ENCODE measurements at regions of chr17 and their contacts with region 1.

Region 1: GRCh38 chr17:17836250-17836817 is 452 bp downstream of the SREBF1 start:
- DNase-seq: peak; percentile 92
- ATAC-seq: peak; percentile 60
- H3K4me3 ChIP-seq: peak overlapping the region; percentile 82 to 94 (median 91)
- H3K27ac ChIP-seq: peak overlapping the region; percentile 90
- H3K4me1 ChIP-seq: peaks cover 84% of the 10 kb centered on the region
- H3K27me3 ChIP-seq: no peaks in the 10 kb centered on the region
- CTCF ChIP-seq: 0 out of 2 replicates have a peak, but pooled peaks have one; percentile 5
- EP300 ChIP-seq: peak in 1 of 2 experiments; percentile 71; a peak in 1 of 4 replicates
- POLR2A ChIP-seq: peak; percentile 96 to 98
- RAD21 ChIP-seq: peak; percentile 65

Region 2: GRCh38 chr17:17812211-17813057 is 23.9 kb before region 1 on chr17:
- CTCF ChIA-PET with region 1: interaction called, 3 read pairs
- POLR2A ChIA-PET with region 1: interaction called, 26 read pairs
- in situ Hi-C with region 1: no loop called
- intact Hi-C with region 1: loop called (anchors 1 kb)
- DNase-seq: peak; percentile 52
- ATAC-seq: peak; percentile 50
- H3K4me3 ChIP-seq: no peak overlapping the region
- H3K27ac ChIP-seq: peak overlapping the region; percentile 58
- H3K4me1 ChIP-seq: peaks cover 28% of the 10 kb centered on the region
- H3K27me3 ChIP-seq: no peaks in the 10 kb centered on the region
- CTCF ChIP-seq: peak; percentile 98
- EP300 ChIP-seq: no peak
- POLR2A ChIP-seq: peak; percentile 16 to 29; a peak in 1 of 4 replicates
- RAD21 ChIP-seq: peak; percentile 95

Region 3: DNA sequence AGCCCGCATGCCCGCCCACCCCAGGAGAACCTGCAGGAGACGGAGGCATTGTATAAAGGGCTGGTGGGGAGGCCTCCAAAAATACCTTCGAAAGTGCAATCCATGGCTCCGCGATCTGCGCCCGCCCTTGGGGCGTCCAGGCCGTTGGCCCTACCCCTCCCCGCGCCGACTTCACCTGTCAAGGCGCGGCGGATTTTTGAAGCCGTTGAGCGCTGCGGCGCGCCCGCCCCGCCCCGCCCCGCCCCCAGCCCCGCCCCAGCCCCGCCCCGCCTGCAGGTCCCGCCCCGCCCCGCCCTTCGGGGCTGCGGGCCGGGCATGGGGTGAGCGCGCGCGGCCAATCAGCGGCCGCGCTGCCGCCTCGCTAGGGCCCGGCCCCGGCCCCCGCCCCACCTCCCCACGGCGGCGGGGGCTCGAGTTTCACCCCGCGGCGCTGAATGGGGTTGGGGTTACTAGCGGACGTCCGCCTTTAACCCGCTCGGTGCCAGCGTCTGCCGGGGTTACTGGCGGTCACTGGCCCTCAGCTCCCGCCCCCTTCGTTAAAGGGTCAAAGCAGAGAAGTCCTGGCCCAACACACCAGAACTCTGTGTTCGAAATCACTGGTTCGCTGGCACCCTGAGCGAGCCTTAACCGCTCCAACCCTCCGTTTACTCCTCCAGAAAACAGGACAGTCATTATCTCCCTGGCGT is 12.8 kb before region 1 on chr17:
- CTCF ChIA-PET with region 1: no interaction called
- POLR2A ChIA-PET with region 1: interaction called, 69 read pairs
- in situ Hi-C with region 1: no loop called
- intact Hi-C with region 1: no loop called
- DNase-seq: peak; percentile 81
- ATAC-seq: peak; percentile 79
- H3K4me3 ChIP-seq: peak overlapping the region; percentile 29 to 69 (median 48); a peak in 5 of 6 replicates
- H3K27ac ChIP-seq: peak overlapping the region; percentile 93
- H3K4me1 ChIP-seq: peaks cover 97% of the 10 kb centered on the region
- H3K27me3 ChIP-seq: no peaks in the 10 kb centered on the region
- CTCF ChIP-seq: no peak
- EP300 ChIP-seq: peak in 1 of 2 experiments; percentile 79; a peak in 1 of 4 replicates
- POLR2A ChIP-seq: peak in 1 of 2 experiments; percentile 60; a peak in 2 of 4 replicates
- RAD21 ChIP-seq: peak; percentile 51; the same call in 1 of the 2 replicates

Region 4: DNA sequence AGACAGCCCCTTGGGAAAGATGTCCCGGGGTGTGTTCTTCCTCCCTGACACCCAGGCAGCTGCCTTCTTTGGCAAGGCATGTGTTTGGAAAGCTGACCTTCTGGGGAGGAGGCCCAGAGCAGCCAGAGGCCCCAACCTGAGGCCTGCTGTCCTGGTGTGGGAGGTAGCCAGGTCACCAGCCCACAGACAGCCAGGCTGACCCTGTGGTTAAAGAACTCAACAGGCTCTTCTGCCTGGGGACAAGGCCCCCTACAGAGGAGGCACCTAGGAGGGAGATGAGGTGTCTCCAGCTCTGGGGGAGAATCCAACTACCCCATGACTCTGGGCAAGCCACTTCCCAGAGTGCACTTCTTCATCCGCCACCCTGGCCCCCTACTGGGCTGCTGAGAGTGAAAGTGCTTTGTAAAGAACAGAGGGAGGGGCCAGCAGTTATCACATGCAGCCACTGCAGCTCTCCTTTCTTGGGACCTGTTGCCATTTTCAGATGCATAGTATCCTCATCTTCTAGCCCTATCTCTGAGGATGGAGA is 13.6 kb after region 1 on chr17:
- CTCF ChIA-PET with region 1: no interaction called
- POLR2A ChIA-PET with region 1: interaction called, 51 read pairs
- in situ Hi-C with region 1: no loop called
- intact Hi-C with region 1: no loop called
- DNase-seq: peak; percentile 62
- ATAC-seq: peak; percentile 72
- H3K4me3 ChIP-seq: 0 out of 6 replicates have a peak overlapping the region, but pooled peaks of 1 of the 3 experiments have one; percentile 13
- H3K27ac ChIP-seq: peak overlapping the region; percentile 31
- H3K4me1 ChIP-seq: peaks cover 51% of the 10 kb centered on the region
- H3K27me3 ChIP-seq: no peaks in the 10 kb centered on the region
- CTCF ChIP-seq: peak; percentile 54
- EP300 ChIP-seq: no peak
- POLR2A ChIP-seq: no peak
- RAD21 ChIP-seq: peak; percentile 33; the same call in 1 of the 2 replicates

Region 5: DNA sequence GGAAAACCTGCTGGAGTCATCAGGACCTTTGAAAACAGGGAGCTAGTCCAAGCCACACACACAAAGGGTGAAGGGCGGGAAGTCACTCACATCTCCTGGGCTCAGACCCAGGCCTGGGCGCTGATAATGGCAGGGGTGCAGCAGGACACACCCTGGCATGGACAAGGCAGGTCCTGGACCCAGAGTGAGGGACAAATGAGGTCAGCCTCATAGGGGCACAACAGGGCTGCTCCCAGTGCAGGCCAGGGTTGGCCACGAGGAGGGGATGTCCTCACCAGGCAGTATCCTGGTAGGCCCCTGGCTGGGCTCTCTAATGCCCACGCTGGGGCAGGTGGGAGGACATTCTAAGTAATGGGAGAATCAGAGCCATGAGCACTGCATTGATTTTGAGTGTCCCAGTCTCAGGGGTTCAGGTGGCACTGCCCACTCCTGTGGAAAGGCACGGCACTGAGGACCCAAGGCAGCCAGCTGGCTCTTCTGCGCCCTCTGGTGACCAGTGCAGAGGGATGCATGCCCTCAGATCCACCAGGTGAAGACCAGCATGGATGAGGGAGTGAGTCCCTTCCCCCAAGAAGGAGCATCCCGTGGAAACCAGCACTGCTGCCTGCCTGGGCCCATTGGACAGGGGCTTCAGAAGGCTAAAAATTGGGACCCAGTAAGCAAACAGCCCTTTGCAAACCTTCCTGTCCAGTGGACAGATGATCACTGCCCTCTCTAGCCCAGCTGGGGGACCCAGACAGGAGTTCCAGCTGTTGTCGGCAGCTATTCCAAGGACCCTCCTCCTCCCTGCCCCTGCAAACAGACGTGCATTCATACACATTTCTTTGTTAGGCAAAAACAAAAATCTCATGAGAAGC is 23.8 kb after region 1 on chr17:
- CTCF ChIA-PET with region 1: no interaction called
- POLR2A ChIA-PET with region 1: interaction called, 13 read pairs
- in situ Hi-C with region 1: no loop called
- intact Hi-C with region 1: no loop called
- DNase-seq: peak; percentile 57
- ATAC-seq: peak; percentile 88
- H3K4me3 ChIP-seq: no peak overlapping the region
- H3K27ac ChIP-seq: no peak overlapping the region
- H3K4me1 ChIP-seq: peaks cover 44% of the 10 kb centered on the region
- H3K27me3 ChIP-seq: no peaks in the 10 kb centered on the region
- CTCF ChIP-seq: peak; percentile 99
- EP300 ChIP-seq: no peak
- POLR2A ChIP-seq: no peak
- RAD21 ChIP-seq: peak; percentile 96